ENCODE measurements at regions of chr2 and their contacts with region 1.

Region 1: GRCh38 chr2:27356382-27357181 is at the start of gene GTF3C2:
- DNase-seq: peak; percentile 96
- ATAC-seq: peak; percentile 82
- H3K4me3 Mint-ChIP-seq: peak within 1 kb of the TSS; percentile 98
- H3K27ac Mint-ChIP-seq: peak within 1 kb of the TSS; percentile 100
- H3K4me1 Mint-ChIP-seq: peaks cover 50% of the 10 kb centered on the region
- H3K27me3 Mint-ChIP-seq: no peaks in the 10 kb centered on the region
- total RNA-seq, gene GTF3C2: 60.3 to 70.2 TPM

Region 2: DNA sequence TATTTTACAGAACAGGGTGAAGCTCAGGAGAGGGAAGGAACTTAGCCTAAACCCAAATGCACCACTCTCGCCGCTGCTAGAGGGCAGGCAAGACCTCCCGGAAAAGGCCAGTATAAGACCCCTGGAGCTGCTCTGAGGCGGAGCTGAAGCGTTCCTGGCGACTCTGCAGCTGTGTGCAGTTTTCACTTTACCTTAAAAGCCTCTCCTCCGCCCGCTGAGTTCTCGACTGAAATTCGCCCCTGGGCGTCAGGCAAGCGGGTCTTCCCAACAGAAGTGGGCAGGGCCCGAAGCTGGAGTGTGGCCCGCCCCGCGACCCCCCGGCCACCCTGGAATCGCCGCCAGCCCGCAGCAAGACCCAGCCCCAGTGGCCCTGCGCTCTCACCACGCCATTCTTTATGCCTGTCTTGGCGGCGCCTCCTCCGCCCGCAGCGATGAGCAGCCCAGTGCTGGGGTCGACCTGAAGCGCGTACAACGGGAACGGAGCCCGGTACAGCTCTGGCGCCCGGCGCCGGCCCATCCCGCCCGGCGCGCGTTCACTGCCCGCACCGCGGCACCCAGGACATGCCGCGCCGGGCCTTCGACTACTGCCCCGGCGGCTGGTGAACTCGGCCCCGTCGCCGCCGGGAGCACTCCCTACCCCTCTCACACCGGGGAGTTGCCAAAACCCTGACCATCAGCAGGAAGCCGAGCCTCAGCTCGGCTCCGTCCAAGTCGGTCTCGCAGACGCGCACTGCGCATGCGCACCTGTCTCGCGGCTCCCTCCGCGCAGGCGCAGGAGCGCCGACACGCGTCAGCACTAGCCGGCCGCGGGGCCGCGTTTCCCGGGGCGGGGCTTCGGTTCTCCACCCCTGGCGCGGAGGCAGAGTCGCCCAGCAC is 222.4 kb before region 1 on chr2 and contains the start of gene PREB:
- CTCF ChIA-PET with region 1: no interaction called
- POLR2A ChIA-PET with region 1: no interaction called
- intact Hi-C with region 1: loop called in 1 of 2 experiments (anchors 1 kb)
- DNase-seq: peak; percentile 99
- ATAC-seq: peak; percentile 97
- H3K4me3 Mint-ChIP-seq: peak within 1 kb of the TSS; percentile 81
- H3K27ac Mint-ChIP-seq: peak within 1 kb of the TSS; percentile 94
- H3K4me1 Mint-ChIP-seq: peaks cover 16% of the 10 kb centered on the region
- H3K27me3 Mint-ChIP-seq: no peaks in the 10 kb centered on the region
- total RNA-seq, gene PREB: 59.7 to 59.9 TPM

Region 3: DNA sequence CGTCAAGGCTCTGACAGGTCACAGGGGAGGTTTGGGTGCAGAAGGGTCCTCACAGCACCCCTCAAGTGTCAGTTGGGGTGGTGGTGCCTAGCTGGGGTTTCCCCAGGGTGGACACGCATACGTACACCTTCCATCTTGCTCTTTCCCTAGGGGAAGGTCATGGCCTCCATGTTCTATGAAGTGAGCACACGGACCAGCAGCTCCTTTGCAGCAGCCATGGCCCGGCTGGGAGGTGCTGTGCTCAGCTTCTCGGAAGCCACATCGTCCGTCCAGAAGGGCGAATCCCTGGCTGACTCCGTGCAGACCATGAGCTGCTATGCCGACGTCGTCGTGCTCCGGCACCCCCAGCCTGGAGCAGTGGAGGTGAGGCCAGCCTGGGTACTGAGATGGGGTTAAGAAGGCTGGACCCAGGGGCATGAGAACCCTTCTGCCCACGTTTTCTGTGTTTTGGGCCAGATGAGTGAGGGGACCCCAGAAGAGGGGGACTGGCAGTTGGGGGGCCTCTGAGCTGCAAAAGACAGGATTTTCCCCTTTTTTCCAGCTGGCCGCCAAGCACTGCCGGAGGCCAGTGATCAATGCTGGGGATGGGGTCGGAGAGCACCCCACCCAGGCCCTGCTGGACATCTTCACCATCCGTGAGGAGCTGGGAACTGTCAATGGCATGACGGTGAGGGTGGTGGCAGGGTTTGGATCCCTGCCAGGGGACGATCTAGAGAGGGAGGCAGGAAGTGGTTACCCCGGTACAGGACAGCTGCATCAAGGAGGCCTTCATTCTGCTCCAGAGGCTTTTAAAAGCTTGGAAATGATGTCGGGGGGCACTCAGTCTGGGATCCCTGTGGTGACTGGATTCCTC is 114.6 kb before region 1 on chr2:
- CTCF ChIA-PET with region 1: no interaction called
- POLR2A ChIA-PET with region 1: no interaction called
- intact Hi-C with region 1: no loop called
- DNase-seq: no peak
- ATAC-seq: no peak
- H3K4me3 Mint-ChIP-seq: no peak overlapping the region
- H3K27ac Mint-ChIP-seq: no peak overlapping the region
- H3K4me1 Mint-ChIP-seq: no peaks in the 10 kb centered on the region
- H3K27me3 Mint-ChIP-seq: no peaks in the 10 kb centered on the region

Region 4: GRCh38 chr2:27322766-27323595 is 33.6 kb before region 1 on chr2 and contains the start of gene MPV17:
- CTCF ChIA-PET with region 1: interaction called, 3 read pairs
- POLR2A ChIA-PET with region 1: interaction called, 3 read pairs
- intact Hi-C with region 1: loop called (anchors 1 to 2 kb)
- DNase-seq: peak; percentile 94
- ATAC-seq: peak; percentile 99
- H3K4me3 Mint-ChIP-seq: peak within 1 kb of the TSS; percentile 98
- H3K27ac Mint-ChIP-seq: peak within 1 kb of the TSS; percentile 98
- H3K4me1 Mint-ChIP-seq: peaks cover 17% of the 10 kb centered on the region
- H3K27me3 Mint-ChIP-seq: no peaks in the 10 kb centered on the region
- total RNA-seq, gene MPV17: 93.4 to 103 TPM

Region 5: DNA sequence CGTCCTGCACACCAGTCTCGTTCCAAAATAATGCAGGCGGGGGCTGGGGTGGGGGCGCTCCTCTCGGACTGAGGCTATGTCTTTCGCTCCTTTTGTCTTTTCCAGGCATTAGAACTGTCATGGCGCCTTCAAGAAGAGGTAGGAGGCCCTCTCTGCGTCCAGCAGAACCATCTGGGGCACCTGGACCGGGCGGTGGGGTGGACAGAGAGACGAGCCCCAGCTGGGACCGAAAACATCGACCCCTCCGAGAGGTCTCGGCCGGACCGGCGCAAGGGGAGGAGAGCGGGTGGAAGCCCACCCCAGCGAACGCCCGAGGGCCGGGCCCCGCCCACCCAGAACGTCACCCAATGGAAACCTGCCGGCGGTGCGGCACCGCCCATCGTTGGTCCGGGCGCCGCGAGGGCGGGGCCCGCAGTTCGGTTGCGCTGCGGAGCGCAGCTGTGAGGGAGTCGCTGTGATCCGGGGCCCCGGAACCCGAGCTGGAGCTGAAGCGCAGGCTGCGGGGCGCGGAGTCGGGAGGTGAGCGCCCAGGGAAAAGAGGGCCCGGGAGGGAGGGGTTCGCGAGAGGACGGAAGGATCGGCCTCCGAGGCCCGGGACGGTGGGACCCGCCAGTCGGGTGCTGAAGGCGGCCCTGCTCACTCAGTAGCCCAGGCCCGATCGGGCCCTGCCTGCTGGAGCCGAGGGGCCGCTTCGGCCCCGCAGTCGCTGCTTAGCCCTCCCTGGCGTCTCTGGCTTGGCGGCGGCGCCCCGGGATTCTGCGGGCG is 71.8 kb after region 1 on chr2 and contains the start of gene NRBP1:
- CTCF ChIA-PET with region 1: interaction called, 4 read pairs
- POLR2A ChIA-PET with region 1: no interaction called
- intact Hi-C with region 1: loop called (anchors 1 to 2 kb)
- DNase-seq: peak; percentile 97
- ATAC-seq: peak; percentile 85
- H3K4me3 Mint-ChIP-seq: peak within 1 kb of the TSS; percentile 100
- H3K27ac Mint-ChIP-seq: peak within 1 kb of the TSS; percentile 98
- H3K4me1 Mint-ChIP-seq: peaks cover 37% of the 10 kb centered on the region
- H3K27me3 Mint-ChIP-seq: no peaks in the 10 kb centered on the region
- total RNA-seq, gene NRBP1: 74.3 to 74.4 TPM

Region 6: GRCh38 chr2:27628767-27629709 is 272.5 kb after region 1 on chr2 and contains the starts of genes CCDC121 and GPN1:
- CTCF ChIA-PET with region 1: no interaction called
- POLR2A ChIA-PET with region 1: interaction called, 3 read pairs
- intact Hi-C with region 1: loop called in 1 of 2 experiments (anchors 1 kb)
- DNase-seq: peak; percentile 98
- ATAC-seq: peak; percentile 96
- H3K4me3 Mint-ChIP-seq: no peak within 1 kb of the TSS
- H3K27ac Mint-ChIP-seq: no peak within 1 kb of the TSS
- H3K4me1 Mint-ChIP-seq: peaks cover 37% of the 10 kb centered on the region
- H3K27me3 Mint-ChIP-seq: no peaks in the 10 kb centered on the region
- total RNA-seq, gene CCDC121: 0.11 to 0.44 TPM
- total RNA-seq, gene GPN1: 45.6 to 63.9 TPM

Measured in activated CD4-positive, alpha-beta T cell treated with anti-CD3 and anti-CD28 coated beads for 36 hours (primary cell).